ENCODE measurements at regions of chr2 and their contacts with region 1.

Region 1: DNA sequence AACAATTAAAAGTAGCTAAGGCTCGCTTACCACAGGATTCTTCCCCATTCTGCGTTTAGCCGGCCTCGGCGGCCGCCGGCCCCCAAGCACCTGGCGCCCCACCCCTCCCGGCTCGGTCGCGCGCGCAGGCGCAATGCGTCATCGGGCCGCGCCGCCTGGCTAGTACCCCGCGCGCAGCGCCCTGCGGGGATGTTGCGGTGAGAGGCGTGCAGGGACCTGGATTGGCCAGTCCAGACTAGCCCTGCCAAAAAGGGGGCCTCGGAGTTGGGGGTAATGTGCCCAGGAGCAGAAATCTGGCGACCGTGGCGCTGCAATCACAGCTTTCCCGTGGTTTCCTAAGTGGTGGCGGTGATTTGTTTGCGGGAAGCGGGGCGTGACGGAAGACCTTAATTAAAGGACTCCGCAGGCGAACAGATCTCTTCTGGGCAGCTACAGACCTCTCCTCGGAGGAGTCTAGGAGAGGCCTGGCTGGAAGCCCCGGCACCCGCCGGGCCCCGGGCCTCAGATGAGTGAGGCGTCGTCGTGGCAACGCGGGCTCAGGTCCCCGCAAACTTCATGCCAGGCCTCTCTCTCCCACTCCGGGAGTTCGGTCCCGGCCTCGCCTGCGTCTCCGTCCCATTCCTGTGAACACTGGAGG is 606 bp downstream of the TMEM237 start:
- DNase-seq: peak; percentile 84
- H3K4me3 Mint-ChIP-seq: peak overlapping the region; percentile 89
- H3K27ac Mint-ChIP-seq: peak overlapping the region; percentile 92
- H3K4me1 Mint-ChIP-seq: peaks cover 18% of the 10 kb centered on the region
- H3K27me3 Mint-ChIP-seq: peaks cover 3% of the 10 kb centered on the region

Region 2: DNA sequence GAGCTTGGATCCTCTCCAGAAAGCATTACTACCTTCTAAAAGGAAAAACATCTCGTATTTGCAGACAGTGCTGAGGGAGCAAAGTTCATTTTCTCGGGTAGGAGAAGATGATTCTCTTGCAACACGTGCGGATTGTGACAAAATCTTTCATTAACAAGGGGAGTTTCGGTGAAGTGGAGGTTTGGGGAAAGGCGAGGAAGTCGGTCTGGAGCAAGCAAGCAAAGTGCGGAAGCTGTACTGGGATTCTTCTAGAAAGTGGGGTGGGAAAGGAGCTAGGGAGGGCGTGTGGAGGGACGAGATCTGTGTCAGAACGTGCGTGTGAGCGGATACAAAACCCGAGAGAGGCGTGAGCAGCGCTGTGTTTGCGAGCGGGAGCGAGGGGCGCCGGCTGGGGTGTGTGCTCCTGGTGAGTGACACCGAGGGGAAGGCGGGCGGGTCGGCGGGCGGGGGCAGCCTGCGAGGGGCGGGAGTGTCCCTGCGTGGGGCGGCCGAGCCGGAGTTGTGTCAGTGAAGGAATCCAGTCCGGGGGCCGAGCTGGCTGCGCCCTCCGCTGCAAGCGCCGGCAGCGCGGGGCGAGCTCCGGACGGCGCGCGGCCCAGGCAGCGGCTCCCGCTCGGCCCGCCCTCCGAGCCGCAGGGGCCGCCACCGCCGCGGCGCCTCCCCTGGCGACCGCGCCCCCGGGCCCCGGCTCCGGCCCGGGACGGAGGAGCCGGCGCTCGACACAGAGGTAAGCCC is 1336.3 kb before region 1 on chr2 and contains the start of gene SPATS2L:
- intact Hi-C with region 1: loop called (anchors 10 kb)
- DNase-seq: peak; percentile 44
- H3K4me3 Mint-ChIP-seq: peak within 1 kb of the TSS; percentile 90
- H3K27ac Mint-ChIP-seq: peak within 1 kb of the TSS; percentile 85
- H3K4me1 Mint-ChIP-seq: peaks cover 35% of the 10 kb centered on the region
- H3K27me3 Mint-ChIP-seq: peaks cover 10% of the 10 kb centered on the region
- total RNA-seq, gene SPATS2L: 35.1 and 38.0 TPM in 2 replicates

Region 3: GRCh38 chr2:201406077-201406662 is 236.5 kb before region 1 on chr2:
- intact Hi-C with region 1: loop called (anchors 5 kb)
- DNase-seq: no peak
- H3K4me3 Mint-ChIP-seq: no peak overlapping the region
- H3K27ac Mint-ChIP-seq: no peak overlapping the region
- H3K4me1 Mint-ChIP-seq: peaks cover 41% of the 10 kb centered on the region
- H3K27me3 Mint-ChIP-seq: no peaks in the 10 kb centered on the region